GM18951 (cell line): ENCODE measurements at regions of chr1 and their contacts with region 1.

Region 1: DNA sequence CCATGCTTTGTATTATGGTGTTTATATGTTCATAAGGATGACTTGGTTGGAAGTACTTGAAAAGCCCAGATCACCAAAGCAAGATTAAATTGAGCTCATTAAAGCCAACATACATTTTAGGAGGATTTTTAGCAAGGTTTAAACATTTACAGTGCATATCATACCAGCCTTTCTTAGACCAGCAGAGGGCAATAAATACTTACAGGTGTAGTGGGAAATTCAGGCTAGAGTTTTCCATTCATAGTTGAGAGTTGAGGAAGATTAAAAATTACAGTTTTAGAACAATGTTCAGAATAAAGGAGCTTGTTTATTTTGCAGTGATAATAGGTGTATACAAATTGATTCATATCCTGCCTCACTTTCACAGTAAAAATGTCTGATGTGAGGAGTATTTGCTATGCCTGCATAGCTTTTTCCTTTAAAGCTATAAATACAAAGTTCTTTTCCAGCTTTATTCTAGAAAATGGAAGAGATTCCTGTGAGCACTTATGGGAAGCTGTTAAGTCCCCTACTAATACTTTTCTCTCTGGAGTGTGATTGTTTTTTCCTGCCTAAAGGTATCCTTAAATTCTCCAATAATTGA is 35.3 kb downstream of the DTL start:
- POLR2A ChIP-seq: no peak

Region 2: GRCh38 chr1:212269306-212269705 is 198.5 kb after region 1 on chr1:
- in situ Hi-C with region 1: no loop called
- POLR2A ChIP-seq: no peak

Region 3: GRCh38 chr1:212375986-212376385 is 305.2 kb after region 1 on chr1:
- in situ Hi-C with region 1: loop called (anchors 10 kb)
- POLR2A ChIP-seq: no peak

Region 4: DNA sequence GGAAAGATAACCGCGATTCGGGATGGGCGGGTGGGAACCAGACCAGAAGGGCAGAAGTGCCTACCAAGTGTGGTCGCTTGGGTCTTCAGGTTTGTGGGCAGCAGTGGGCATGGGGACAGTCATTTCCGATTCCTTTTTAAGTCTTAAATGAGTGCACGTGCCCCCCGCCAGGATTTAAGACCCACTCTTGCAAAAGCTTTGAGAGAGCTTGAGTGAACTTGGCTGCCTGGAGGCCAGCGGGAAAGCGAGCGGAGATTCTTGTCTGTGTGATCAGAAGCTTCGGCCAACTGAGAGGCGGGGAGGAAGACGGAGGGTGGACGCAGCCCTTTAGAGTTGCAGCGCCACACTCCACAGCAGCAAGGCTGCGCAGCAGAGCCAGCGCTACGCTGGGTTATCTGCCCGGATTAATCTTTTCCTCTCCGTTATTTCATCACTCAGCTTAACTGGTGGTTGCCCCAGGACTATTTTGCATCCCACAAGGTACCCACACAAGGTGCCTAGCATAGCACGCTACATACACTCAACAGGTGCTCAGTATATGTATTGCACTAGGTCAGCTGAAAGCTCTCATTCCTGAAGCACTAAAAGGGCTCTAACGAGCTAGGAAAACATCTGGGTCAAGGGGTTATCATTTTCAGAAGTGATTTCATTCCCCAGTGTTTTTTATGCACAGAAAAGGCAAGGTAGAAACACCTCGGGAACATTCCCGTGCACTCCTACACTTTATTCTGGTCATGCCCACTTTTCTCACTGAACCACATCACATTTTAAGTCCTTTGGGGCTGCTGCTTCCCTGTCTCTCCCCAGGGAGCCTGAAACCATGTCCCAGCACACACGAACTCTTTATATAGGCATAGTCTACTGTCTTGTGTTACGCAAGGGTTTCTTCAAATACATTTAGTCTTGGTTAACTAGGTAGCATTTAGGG is 630.3 kb after region 1 on chr1:
- in situ Hi-C with region 1: no loop called
- POLR2A ChIP-seq: no peak